HCT116 (cell line): ENCODE measurements at regions of chr2 and their contacts with region 1.

Region 1: GRCh38 chr2:85538486-85539360 is at the start of gene MAT2A:
- DNase-seq: peak; percentile 89
- ATAC-seq: peak; percentile 81
- H3K4me3 ChIP-seq: peak within 1 kb of the TSS; percentile 84 to 94
- H3K27ac ChIP-seq: peak within 1 kb of the TSS; percentile 99
- H3K4me1 ChIP-seq: peaks cover 14 to 45% of the 10 kb centered on the region in 2 experiments; a peak in 3 of 4 replicates
- H3K27me3 ChIP-seq: no peaks in the 10 kb centered on the region
- CTCF ChIP-seq: peak in 2 of 3 experiments; percentile 58 to 74; a peak in 4 of 6 replicates
- POLR2A ChIP-seq: peak; percentile 99
- RAD21 ChIP-seq: no peak
- total RNA-seq, gene MAT2A: 444 TPM

Region 2: GRCh38 chr2:85420536-85421259 is 118.0 kb before region 1 on chr2:
- CTCF ChIA-PET with region 1: interaction called, 17 read pairs
- POLR2A ChIA-PET with region 1: interaction called, 236 read pairs
- RAD21 ChIA-PET with region 1: interaction called in 1 of 2 experiments, 6 read pairs
- intact Hi-C with region 1: loop called (anchors 2 kb)
- DNase-seq: no peak
- ATAC-seq: peak; percentile 75
- H3K4me3 ChIP-seq: no peak overlapping the region
- H3K27ac ChIP-seq: peak overlapping the region; percentile 88
- H3K4me1 ChIP-seq: peaks cover 35 to 43% of the 10 kb centered on the region in 2 experiments; a peak in 3 of 4 replicates
- H3K27me3 ChIP-seq: no peaks in the 10 kb centered on the region
- CTCF ChIP-seq: peak in 2 of 3 experiments; percentile 92 to 100; a peak in 4 of 6 replicates
- POLR2A ChIP-seq: no peak
- RAD21 ChIP-seq: no peak

Region 3: GRCh38 chr2:85445316-85446295 is 93.1 kb before region 1 on chr2:
- CTCF ChIA-PET with region 1: no interaction called
- POLR2A ChIA-PET with region 1: interaction called, 45 read pairs
- RAD21 ChIA-PET with region 1: interaction called in 1 of 2 experiments, 3 read pairs
- intact Hi-C with region 1: no loop called
- DNase-seq: no peak
- ATAC-seq: peak; percentile 53; the same call in 1 of the 2 replicates
- H3K4me3 ChIP-seq: no peak overlapping the region
- H3K27ac ChIP-seq: peak overlapping the region; percentile 46; the same call in 1 of the 2 replicates
- H3K4me1 ChIP-seq: peaks cover 22 to 26% of the 10 kb centered on the region in 2 experiments
- H3K27me3 ChIP-seq: no peaks in the 10 kb centered on the region
- CTCF ChIP-seq: no peak
- POLR2A ChIP-seq: no peak
- RAD21 ChIP-seq: no peak

Region 4: DNA sequence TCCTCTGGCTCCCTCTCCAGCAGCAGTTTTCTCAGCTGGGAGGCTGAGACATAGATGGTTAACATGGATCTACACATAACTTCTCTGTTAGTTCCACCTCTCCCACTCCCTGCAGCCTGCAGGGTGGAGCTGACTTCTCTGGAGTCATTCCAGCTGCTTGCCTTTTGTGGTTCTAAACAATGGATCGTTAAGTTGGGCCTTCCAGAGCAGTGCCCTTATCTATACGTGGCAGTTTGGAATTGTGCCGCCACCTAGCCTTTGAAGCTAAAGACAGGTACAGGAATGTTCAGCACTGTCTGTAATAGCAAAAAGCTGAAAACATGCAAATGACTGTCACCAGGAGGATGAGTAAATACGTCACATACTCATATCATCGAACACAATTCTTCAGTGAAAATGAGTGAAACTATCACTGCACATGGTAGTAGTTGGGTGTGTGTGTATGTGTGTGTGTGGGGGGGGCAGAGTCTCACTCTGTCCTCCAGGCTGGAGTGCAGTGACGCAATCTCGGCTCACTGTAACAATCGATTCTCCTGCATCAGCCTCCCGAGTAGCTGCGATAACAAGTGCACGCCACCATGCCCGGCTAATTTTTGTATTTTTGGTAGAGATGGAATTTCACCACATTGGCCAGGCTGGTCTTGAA is 69.9 kb before region 1 on chr2:
- CTCF ChIA-PET with region 1: interaction called, 3 read pairs
- POLR2A ChIA-PET with region 1: interaction called, 26 read pairs
- RAD21 ChIA-PET with region 1: interaction called in 1 of 2 experiments, 7 read pairs
- intact Hi-C with region 1: no loop called
- DNase-seq: peak; percentile 75
- ATAC-seq: peak; percentile 85
- H3K4me3 ChIP-seq: peak overlapping the region in 1 of 2 experiments; percentile 26; a peak in 2 of 4 replicates
- H3K27ac ChIP-seq: peak overlapping the region; percentile 56
- H3K4me1 ChIP-seq: peaks cover 28 to 53% of the 10 kb centered on the region in 2 experiments
- H3K27me3 ChIP-seq: no peaks in the 10 kb centered on the region
- CTCF ChIP-seq: no peak
- POLR2A ChIP-seq: no peak
- RAD21 ChIP-seq: peak; percentile 16; the same call in 1 of the 2 replicates

Region 5: DNA sequence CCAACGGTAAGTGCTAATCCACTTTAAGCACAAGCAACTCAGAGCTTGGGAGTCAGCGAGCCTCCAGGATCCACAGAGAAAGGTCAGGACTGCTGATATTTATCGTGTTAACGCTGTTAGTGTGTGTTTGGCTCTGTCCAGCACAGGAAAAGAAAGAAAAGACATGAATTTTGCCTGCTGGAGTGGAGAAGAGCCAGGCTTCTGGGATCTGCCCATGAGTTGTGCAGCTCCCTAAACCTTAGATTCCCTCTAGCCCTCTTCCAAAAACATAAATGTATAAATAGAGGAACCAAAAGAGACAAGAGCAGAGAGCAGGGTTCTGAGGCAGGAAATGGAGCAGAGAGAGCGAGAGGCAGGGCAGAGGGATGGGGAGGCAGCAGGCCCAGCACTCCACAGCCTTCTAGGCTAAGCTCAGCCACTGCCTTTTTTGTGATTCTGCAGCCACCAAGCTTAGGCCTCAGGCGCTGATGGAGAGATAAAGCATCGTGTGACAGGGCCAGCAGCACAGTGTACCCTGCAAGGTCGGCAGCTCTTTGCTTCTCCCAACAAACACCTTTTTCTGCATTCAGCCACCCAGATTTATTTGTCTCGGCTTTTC is 14.3 kb before region 1 on chr2:
- CTCF ChIA-PET with region 1: no interaction called
- POLR2A ChIA-PET with region 1: interaction called, 16 read pairs
- RAD21 ChIA-PET with region 1: no interaction called
- intact Hi-C with region 1: no loop called
- DNase-seq: no peak
- ATAC-seq: no peak
- H3K4me3 ChIP-seq: no peak overlapping the region
- H3K27ac ChIP-seq: no peak overlapping the region
- H3K4me1 ChIP-seq: no peaks in the 10 kb centered on the region
- H3K27me3 ChIP-seq: no peaks in the 10 kb centered on the region
- CTCF ChIP-seq: no peak
- POLR2A ChIP-seq: no peak
- RAD21 ChIP-seq: no peak